OCI-LY7 (cell line): ENCODE measurements at regions of chr6 and their contacts with region 1.

Region 1: GRCh38 chr6:132725471-132725870 is 11.6 kb upstream of the VNN1 start:
- DNase-seq: no peak
- H3K4me3 ChIP-seq: no peak overlapping the region
- H3K27ac ChIP-seq: no peak overlapping the region
- H3K4me1 ChIP-seq: peaks cover 7% of the 10 kb centered on the region
- CTCF ChIP-seq: no peak

Region 2: DNA sequence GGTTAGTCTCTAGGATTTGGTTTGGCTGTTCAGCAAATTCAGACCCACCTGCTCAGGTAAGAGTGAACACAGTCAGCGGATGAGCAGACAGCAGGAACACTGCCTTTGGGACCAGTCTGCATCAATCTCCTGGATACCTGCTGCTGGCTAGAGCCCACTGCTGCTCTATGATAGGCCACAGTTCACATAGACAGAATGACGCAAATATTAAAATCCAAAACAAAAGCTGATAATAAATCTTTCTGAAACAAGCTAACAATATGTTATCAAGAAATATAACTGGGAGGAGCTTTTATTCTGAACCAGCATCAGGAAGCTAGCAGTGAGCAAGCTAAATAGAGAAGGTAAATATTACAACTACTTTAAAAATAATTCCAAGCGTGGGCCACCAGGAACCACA is 66.4 kb before region 1 on chr6 and contains the start of gene TAAR1:
- CTCF ChIA-PET with region 1: no interaction called
- POLR2A ChIA-PET with region 1: no interaction called
- intact Hi-C with region 1: no loop called
- DNase-seq: no peak
- H3K4me3 ChIP-seq: no peak within 1 kb of the TSS
- H3K27ac ChIP-seq: no peak within 1 kb of the TSS
- H3K4me1 ChIP-seq: no peaks in the 10 kb centered on the region
- CTCF ChIP-seq: no peak
- total RNA-seq, gene TAAR1: not detected in 2 replicates

Region 3: GRCh38 chr6:132715204-132715603 is 10.3 kb before region 1 on chr6:
- CTCF ChIA-PET with region 1: no interaction called
- POLR2A ChIA-PET with region 1: interaction called, 13 read pairs
- intact Hi-C with region 1: no loop called
- DNase-seq: no peak
- H3K4me3 ChIP-seq: no peak overlapping the region
- H3K27ac ChIP-seq: no peak overlapping the region
- H3K4me1 ChIP-seq: peaks cover 12% of the 10 kb centered on the region
- CTCF ChIP-seq: no peak